Dorsolateral prefrontal cortex (tissue), 120 donors: ENCODE measurements at regions of chr1 and their contacts with region 1.

Region 1: GRCh38 chr1:223338811-223339746 is 24.9 kb downstream of the SUSD4 start:
- DNase-seq: peak in 1 of 10 donors; percentile 44
- H3K4me3 ChIP-seq: no peak overlapping the region
- H3K27ac ChIP-seq: peak overlapping the region in 41 of 59 donors; percentile 12 to 78 (median 57)
- H3K27me3 ChIP-seq: peaks cover 0 to 5% (median 0%) of the 10 kb centered on the region in 45 donors
- CTCF ChIP-seq: no peak

Region 2: GRCh38 chr1:223233410-223234169 is 105.5 kb before region 1 on chr1:
- intact Hi-C with region 1: loop called in 1 of 2 experiments (anchors 5 kb)
- DNase-seq: peak in 5 of 10 donors; percentile 5 to 60 (median 44)
- H3K4me3 ChIP-seq: no peak overlapping the region
- H3K27ac ChIP-seq: peak overlapping the region in 46 of 59 donors; percentile 11 to 81 (median 55)
- H3K27me3 ChIP-seq: no peaks in the 10 kb centered on the region
- CTCF ChIP-seq: no peak